Aorta (tissue), 5 donors: ENCODE measurements at regions of chr10 and their contacts with region 1.

Region 1: GRCh38 chr10:104209575-104210198 is 22.5 kb downstream of the CFAP43 start:
- DNase-seq: no peak
- ATAC-seq: no peak
- H3K4me3 ChIP-seq: no peak overlapping the region
- H3K27ac ChIP-seq: no peak overlapping the region
- H3K4me1 ChIP-seq: no peaks in the 10 kb centered on the region
- H3K27me3 ChIP-seq: no peaks in the 10 kb centered on the region

Region 2: GRCh38 chr10:103859161-103860086 is 350.3 kb before region 1 on chr10:
- intact Hi-C with region 1: no loop called
- DNase-seq: no peak
- ATAC-seq: peak; percentile 78
- H3K4me3 ChIP-seq: no peak overlapping the region
- H3K27ac ChIP-seq: no peak overlapping the region
- H3K4me1 ChIP-seq: no peaks in the 10 kb centered on the region
- H3K27me3 ChIP-seq: no peaks in the 10 kb centered on the region

Region 3: DNA sequence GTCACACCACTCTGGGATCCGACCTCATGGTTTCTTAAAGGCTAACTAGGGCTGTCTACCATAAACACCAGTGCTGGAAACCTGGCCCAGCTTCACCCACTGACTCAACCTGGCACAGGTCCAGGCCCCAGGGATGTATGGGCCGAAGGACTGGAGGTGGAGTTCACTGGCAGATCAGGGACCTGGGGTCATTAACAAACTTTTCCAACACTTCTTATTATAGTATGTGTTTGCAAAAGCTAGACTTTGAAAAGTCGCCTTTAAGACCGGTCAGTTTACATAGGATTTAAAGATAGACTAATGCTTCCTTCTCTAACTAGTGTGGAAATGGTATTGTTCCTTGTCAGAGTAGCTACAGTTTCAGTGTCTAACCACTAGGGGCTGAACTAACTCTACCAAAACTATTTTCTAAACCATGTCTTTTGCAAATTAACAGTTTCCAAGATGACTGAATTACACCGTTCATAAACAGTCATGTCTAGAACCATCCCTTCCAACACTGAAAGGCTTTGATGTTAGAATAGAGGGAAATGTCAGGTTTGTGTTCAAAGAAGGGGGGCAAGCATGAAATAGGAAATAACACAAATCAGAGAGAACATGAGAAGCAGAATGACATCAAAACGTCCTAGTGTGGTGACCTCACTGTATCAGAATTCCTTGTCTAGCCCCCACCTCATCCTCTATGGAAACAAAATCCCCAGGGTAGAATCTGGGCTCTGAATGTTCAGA is 321.4 kb before region 1 on chr10:
- intact Hi-C with region 1: loop called (anchors 5 to 10 kb)
- DNase-seq: peak; percentile 85 to 96
- ATAC-seq: peak; percentile 88
- H3K4me3 ChIP-seq: no peak overlapping the region
- H3K27ac ChIP-seq: peak overlapping the region; percentile 60 to 78
- H3K4me1 ChIP-seq: peaks cover 3 to 4% of the 10 kb centered on the region in 2 donors
- H3K27me3 ChIP-seq: no peaks in the 10 kb centered on the region

Region 4: GRCh38 chr10:104016661-104017060 is 193.0 kb before region 1 on chr10:
- intact Hi-C with region 1: no loop called
- DNase-seq: no peak
- ATAC-seq: no peak
- H3K4me3 ChIP-seq: no peak overlapping the region
- H3K27ac ChIP-seq: no peak overlapping the region
- H3K4me1 ChIP-seq: no peaks in the 10 kb centered on the region
- H3K27me3 ChIP-seq: no peaks in the 10 kb centered on the region

Region 5: DNA sequence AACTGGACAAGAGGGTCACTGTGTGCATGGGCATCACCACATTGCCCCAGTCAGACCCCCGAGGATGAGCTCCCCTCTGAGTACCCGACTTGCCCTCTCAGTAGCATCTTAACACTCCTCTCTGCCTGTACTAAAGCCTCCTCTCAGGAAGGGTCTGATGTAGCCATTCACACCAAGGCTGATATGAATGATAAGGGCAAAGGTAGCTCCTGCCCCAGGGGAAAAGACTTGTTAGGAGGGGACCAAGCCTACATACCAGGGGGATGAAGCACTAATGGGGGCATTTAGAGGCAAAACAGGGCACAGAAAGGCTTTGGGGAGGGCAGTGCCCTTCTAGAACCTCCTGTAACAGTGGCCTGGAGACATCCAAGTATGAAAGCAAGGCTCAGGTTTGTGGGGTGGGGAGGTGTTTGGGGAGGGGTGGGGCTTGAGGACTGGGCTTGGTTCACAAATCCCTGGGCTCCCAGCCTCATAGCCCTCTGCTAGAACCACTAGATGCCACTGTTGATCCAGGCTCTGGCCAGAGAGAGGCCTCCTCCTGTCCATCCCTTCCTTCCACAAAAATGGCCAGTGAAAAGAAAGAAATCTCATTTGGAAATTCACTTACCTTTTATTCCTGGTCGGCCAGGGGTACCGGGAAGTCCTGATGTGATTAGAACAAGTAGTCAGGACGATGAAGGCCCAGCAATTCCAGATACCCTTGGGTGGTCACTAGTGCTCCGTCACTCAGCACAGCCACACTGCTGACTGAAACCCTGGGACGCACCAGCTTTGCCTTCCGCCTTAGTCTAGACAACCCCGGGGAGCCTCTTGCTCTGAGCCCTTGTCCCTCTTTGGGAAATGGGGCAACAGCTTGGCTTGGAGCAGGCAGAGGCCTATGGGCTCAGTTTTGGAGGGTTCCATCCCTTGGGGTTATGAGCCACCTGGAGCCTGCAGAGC is 164.3 kb before region 1 on chr10:
- intact Hi-C with region 1: loop called (anchors 5 kb)
- DNase-seq: peak in 1 of 2 donors; percentile 61
- ATAC-seq: peak; percentile 72
- H3K4me3 ChIP-seq: no peak overlapping the region
- H3K27ac ChIP-seq: no peak overlapping the region
- H3K4me1 ChIP-seq: no peaks in the 10 kb centered on the region
- H3K27me3 ChIP-seq: no peaks in the 10 kb centered on the region

Region 6: GRCh38 chr10:104291439-104291951 is 81.8 kb after region 1 on chr10:
- intact Hi-C with region 1: no loop called
- DNase-seq: peak; percentile 92 to 96
- ATAC-seq: peak; percentile 98
- H3K4me3 ChIP-seq: no peak overlapping the region
- H3K27ac ChIP-seq: no peak overlapping the region
- H3K4me1 ChIP-seq: no peaks in the 10 kb centered on the region
- H3K27me3 ChIP-seq: no peaks in the 10 kb centered on the region